PC-9 (cell line): ENCODE measurements at regions of chr3 and their contacts with region 1.

Region 1: GRCh38 chr3:14001136-14001535 is 121.3 kb upstream of the WNT7A start:
- DNase-seq: no peak
- H3K4me3 ChIP-seq: no peak overlapping the region
- H3K27ac ChIP-seq: no peak overlapping the region
- H3K4me1 ChIP-seq: peaks cover 4% of the 10 kb centered on the region; the same call in 1 of the 2 replicates
- H3K27me3 ChIP-seq: no peaks in the 10 kb centered on the region
- CTCF ChIP-seq: no peak

Region 2: GRCh38 chr3:15535732-15536131 is 1534.6 kb after region 1 on chr3:
- CTCF ChIA-PET with region 1: interaction called, 10 read pairs
- POLR2A ChIA-PET with region 1: no interaction called
- intact Hi-C with region 1: no loop called
- DNase-seq: no peak
- H3K4me3 ChIP-seq: no peak overlapping the region
- H3K27ac ChIP-seq: no peak overlapping the region
- H3K4me1 ChIP-seq: no peaks in the 10 kb centered on the region
- H3K27me3 ChIP-seq: no peaks in the 10 kb centered on the region
- CTCF ChIP-seq: no peak